ENCODE measurements at regions of chr1 and their contacts with region 1.

Region 1: DNA sequence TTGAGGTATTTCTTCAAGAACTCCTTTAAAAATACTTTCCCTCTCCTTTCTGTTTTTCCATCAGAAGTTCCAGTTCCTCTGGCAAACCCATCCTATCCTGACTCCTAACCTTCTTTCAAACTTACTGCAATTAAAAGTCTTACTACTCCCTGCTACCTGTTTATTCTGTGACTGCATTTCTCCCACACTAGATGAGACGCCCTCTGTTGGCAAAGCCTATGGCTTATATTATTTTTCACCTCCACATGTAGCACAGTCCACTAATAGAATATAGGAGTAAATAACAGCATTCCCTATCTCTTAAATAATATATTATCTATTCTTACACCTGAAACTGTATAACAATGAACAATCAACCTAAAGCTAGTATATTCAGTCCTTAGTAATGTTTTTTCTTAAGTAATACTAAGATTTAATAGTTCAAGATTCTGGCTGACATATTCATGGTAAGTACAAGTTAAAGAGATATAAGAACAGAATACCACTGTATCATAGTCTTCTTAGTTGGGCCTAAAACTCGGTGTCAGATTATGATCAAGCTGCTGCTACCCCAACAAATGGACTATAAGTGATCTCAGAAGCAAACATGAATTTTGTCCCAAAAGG is 54.8 kb downstream of the RAB3GAP2 start:
- DNase-seq: no peak
- H3K4me3 ChIP-seq: no peak overlapping the region
- CTCF ChIP-seq: no peak

Region 2: DNA sequence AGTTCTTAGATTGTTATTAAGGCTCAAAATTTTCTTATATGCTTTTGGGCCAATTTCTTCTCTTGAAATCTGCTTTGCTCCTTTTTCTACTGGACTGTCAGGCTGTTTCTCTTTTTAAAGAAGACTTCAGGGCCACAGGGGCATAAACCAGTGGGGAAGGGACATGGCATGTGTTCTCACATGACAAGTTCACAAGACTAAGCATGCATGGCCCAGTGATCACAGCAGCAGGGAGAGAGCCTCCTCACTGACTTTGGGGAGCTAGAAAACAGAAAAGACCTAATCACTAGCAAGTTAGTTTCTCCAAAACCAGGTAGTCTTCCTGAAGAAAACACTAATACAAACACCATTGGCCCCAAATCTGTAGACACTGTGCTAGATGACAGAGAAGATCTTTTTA is 10.1 kb before region 1 on chr1:
- CTCF ChIA-PET with region 1: interaction called, 15 read pairs
- POLR2A ChIA-PET with region 1: no interaction called
- DNase-seq: no peak
- H3K4me3 ChIP-seq: no peak overlapping the region
- CTCF ChIP-seq: no peak

Region 3: DNA sequence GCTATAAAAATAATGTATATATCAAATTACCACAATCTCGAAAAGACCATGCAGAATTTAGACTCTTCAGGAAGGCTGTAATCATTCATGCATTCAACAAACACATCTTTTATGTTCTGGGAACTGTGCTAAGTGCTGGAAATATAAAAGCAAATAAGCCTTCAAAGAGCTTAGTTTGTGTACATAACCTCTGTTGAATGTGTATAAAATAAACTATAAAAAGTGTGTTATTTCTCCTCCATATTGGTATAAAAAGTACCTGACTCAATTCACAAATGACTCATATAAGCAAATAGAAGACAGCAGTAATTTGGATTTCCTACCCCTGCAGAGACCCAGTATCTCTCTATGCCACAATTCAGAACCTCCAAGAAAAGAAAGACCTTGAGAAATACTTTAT is 18.0 kb after region 1 on chr1:
- CTCF ChIA-PET with region 1: interaction called, 18 read pairs
- POLR2A ChIA-PET with region 1: interaction called, 6 read pairs
- DNase-seq: no peak
- H3K4me3 ChIP-seq: no peak overlapping the region
- CTCF ChIP-seq: no peak

Region 4: DNA sequence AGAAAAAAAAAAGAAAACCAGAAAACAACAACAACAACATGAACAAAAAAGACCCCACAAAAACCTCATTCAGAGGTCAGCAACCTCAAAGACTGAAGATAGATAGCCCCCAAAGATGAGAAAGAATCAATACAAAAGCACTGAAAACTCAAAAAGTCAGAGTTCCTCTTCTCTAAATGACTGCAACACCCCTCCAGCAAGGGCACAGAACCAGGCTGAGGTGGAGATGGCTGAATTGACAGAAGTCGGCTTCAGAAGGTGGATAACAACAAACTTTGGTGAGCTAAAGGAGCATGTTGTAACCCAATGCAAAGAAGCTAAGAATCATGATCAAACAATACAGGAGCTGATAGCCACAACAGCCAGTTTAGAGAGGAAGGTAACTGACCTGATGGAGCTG is 37.7 kb after region 1 on chr1:
- CTCF ChIA-PET with region 1: no interaction called
- POLR2A ChIA-PET with region 1: no interaction called
- DNase-seq: no peak
- H3K4me3 ChIP-seq: no peak overlapping the region
- CTCF ChIP-seq: no peak